WTC11 (cell line): ENCODE measurements at regions of chr3 and their contacts with region 1.

Region 1: DNA sequence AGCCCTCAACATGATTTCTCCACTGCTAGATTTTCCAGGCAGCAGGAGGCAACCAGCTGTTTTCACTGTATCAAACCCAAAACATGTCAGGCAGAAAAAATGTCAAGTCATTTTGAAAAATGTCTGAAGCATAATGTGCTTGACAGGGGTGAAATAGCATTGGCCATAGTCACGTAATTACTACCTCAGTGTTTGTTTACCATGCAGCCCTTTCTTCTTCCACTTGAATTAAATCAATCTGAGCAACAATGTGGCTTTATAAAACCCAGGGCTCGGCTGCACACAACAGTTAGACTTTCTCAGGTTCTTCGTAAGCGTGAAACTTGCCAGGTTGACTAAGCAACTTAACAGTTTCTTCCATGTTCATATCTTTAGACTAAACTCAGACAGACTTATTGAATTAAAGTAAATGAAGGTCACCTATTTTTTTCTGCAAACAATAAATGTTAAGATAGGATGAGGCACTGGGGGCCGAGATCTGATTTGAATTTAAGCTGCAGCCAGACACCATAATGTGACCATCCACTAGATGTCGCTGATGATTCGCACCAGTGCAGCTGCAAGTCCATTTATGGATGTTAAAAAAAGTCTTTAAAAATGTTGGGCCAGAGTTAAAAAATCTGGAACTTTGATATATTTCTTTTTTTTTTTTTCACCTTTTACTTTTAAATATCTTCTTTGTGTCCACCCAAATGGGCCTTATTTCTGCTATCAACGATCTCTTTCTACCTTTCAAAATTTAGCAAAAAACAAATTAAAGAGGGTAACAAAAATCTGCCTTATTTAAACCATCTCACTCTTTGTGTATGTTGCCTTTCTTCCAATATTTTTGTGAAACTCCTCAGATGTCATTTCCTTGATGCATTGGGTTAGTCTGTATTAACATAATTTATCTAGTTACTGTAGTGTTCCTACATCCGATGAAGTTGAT is 305.9 kb downstream of the CACNA2D3 start:
- DNase-seq: peak; percentile 71
- ATAC-seq: peak; percentile 56
- H3K4me3 Mint-ChIP-seq: no peak overlapping the region
- H3K27ac Mint-ChIP-seq: no peak overlapping the region
- H3K4me1 Mint-ChIP-seq: peaks cover 21% of the 10 kb centered on the region
- H3K27me3 Mint-ChIP-seq: no peaks in the 10 kb centered on the region
- CTCF ChIP-seq: peak; percentile 48; the same call in 1 of the 2 replicates

Region 2: DNA sequence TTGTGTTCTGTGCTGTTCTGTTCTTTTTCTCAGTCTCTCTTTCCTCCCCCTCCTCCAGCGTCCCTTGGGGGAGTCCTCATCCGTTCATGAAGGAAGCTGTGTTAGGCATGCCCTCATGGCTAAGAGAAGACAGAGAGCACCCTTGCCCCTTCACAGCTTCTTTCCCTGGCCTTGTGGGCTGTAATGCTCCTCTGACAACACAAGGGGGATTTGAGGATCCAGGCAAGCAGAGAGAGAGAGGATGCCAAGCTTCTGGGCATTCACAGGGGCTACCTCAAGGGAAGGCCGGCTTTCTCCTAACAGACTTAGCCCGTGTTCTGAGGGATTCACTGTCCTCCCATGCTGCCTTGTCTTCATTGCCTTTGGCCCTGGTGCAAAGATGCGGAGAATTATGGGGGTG is 110.1 kb after region 1 on chr3:
- CTCF ChIA-PET with region 1: interaction called, 24 read pairs
- POLR2A ChIA-PET with region 1: no interaction called
- DNase-seq: peak; percentile 48
- ATAC-seq: peak; percentile 90
- H3K4me3 Mint-ChIP-seq: no peak overlapping the region
- H3K27ac Mint-ChIP-seq: no peak overlapping the region
- H3K4me1 Mint-ChIP-seq: peaks cover 2% of the 10 kb centered on the region; the same call in 1 of the 2 replicates
- H3K27me3 Mint-ChIP-seq: no peaks in the 10 kb centered on the region
- CTCF ChIP-seq: peak; percentile 48

Region 3: DNA sequence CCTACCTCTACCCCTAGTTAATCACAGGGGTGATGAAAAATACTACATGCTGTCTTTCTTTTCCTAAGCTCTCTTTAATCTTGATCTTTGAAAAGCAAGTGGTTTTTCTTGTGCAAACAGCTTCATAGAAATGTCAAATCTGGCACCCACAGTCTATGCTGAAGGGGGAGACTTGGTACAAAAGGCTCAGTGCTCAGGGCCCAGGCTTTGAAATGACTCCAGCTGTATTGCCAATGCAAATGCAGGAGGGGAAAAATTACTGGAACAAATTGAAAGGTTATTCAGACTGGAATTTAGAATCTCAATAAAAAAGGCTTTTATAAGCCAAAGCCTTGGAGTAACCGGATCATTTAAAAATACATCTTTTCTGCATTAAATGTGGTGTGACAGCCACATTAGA is 275.7 kb after region 1 on chr3:
- CTCF ChIA-PET with region 1: no interaction called
- POLR2A ChIA-PET with region 1: no interaction called
- DNase-seq: no peak
- ATAC-seq: peak; percentile 20; the same call in 1 of the 2 replicates
- H3K4me3 Mint-ChIP-seq: no peak overlapping the region
- H3K27ac Mint-ChIP-seq: peak overlapping the region; percentile 71
- H3K4me1 Mint-ChIP-seq: peaks cover 55% of the 10 kb centered on the region
- H3K27me3 Mint-ChIP-seq: no peaks in the 10 kb centered on the region; the same call in 1 of the 2 replicates
- CTCF ChIP-seq: no peak